Motor neuron (in vitro differentiated cells): ENCODE measurements at regions of chr4 and their contacts with region 1.

Region 1: GRCh38 chr4:54233277-54233696 is 4.2 kb downstream of the PDGFRA start:
- ATAC-seq: peak; percentile 55 to 96 (median 95)
- H3K4me3 ChIP-seq: peak overlapping the region; percentile 39 to 66 (median 49)
- H3K27ac ChIP-seq: no peak overlapping the region
- H3K4me1 ChIP-seq: peaks cover 0 to 6% of the 10 kb centered on the region in 2 donors

Region 2: GRCh38 chr4:52234561-52235440 is 1998.5 kb before region 1 on chr4:
- in situ Hi-C with region 1: loop called in 3 of 9 experiments (anchors 25 kb)
- ATAC-seq: peak in 7 of 8 experiments; percentile 38 to 99 (median 56)
- H3K4me3 ChIP-seq: no peak overlapping the region
- H3K27ac ChIP-seq: no peak overlapping the region
- H3K4me1 ChIP-seq: peaks cover 0 to 2% of the 10 kb centered on the region in 2 donors

Region 3: DNA sequence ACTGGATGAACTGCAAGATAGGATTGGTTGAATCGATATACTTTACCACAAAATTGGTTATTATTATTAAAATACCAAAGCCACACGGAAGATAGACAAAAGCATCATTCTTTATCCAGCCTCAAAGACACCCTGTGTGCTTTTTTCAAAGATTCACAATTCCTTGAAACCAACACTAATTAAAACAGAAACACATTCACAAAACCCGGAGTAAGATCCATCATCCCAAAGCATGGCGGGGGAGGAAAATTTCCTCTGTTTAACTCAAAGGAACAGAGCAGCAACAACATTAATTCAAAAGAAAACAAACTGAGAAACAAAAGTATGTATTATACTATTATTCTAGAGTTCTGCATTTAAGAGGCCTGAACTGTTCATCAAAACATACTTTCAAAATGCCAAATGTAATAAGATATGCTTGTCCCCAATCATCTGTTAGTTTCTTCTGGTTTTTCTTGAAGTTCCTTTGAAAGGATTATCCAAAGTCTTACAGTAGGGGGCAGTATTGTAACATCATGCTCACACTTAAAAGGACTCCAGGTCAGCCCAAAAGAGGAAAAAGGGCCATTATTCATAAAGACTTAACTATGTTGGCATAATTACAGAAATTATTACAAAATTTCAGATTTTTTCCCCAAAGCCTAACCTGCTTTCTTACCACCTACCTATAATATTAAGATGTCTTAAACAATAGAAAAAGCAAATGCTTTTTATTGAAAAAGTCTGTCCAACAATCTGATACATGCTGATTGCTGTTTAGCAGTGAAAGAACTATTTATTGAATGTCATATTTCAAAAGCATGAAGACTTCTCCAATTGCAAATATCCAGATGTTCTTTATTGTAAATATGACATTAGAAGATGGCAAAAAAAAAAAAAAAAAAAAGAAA is 1036.2 kb before region 1 on chr4:
- in situ Hi-C with region 1: loop called in 2 of 9 experiments (anchors 10 to 25 kb)
- ATAC-seq: peak in 3 of 8 experiments; percentile 86
- H3K4me3 ChIP-seq: no peak overlapping the region
- H3K27ac ChIP-seq: no peak overlapping the region
- H3K4me1 ChIP-seq: no peaks in the 10 kb centered on the region

Region 4: GRCh38 chr4:53748328-53748772 is 484.9 kb before region 1 on chr4:
- in situ Hi-C with region 1: no loop called
- ATAC-seq: no peak
- H3K4me3 ChIP-seq: no peak overlapping the region
- H3K27ac ChIP-seq: no peak overlapping the region
- H3K4me1 ChIP-seq: no peaks in the 10 kb centered on the region

Region 5: DNA sequence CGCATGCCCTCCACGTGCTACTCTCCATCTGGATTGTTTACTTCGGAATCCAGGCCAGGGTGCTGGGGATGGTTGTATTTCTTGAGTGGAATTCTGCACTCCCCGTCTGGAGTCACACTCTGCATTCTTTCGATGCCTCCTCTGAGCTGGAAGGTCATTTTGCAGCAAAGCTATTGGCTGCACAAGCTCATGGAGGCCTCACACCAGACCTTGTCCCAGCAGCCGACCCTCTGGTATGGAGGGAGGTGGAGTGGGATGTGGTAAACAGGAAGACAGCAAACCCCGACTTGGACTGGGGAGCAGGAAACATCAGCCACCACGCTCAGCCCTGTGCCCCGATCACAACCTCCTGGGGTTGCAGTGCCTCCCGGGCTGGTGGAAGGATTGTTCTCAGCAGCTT is 416.7 kb before region 1 on chr4:
- in situ Hi-C with region 1: no loop called
- ATAC-seq: no peak
- H3K4me3 ChIP-seq: no peak overlapping the region
- H3K27ac ChIP-seq: no peak overlapping the region
- H3K4me1 ChIP-seq: no peaks in the 10 kb centered on the region

Region 6: DNA sequence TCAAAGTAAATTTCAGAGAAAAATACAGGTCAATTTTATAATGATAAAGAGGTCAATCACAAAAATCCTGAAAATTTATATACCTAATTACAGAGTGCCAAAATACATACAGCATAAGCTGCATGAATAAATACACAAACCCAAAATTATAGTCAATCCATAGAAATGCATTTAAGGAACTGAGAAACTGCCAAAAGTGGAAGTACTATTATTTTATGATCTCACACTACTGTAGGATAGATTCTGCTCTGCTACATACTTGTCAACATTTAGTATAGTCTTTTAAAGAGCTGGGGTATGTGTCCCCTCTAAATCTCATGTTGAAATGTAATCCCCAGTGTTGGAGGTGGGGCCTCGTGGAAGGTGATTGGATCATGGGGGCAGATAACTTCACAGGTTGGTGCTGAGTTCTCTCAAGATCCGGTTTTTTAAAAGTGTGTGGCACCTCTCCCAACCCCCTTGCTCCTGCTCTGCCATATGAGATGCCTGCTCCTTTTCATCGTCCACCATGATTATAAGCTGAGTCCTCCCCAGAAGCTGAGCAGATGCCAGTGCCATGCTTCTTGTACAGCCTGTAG is 200.6 kb before region 1 on chr4:
- in situ Hi-C with region 1: no loop called
- ATAC-seq: no peak
- H3K4me3 ChIP-seq: no peak overlapping the region
- H3K27ac ChIP-seq: no peak overlapping the region
- H3K4me1 ChIP-seq: no peaks in the 10 kb centered on the region